ENCODE measurements at regions of chr1 and their contacts with region 1.

Region 1: DNA sequence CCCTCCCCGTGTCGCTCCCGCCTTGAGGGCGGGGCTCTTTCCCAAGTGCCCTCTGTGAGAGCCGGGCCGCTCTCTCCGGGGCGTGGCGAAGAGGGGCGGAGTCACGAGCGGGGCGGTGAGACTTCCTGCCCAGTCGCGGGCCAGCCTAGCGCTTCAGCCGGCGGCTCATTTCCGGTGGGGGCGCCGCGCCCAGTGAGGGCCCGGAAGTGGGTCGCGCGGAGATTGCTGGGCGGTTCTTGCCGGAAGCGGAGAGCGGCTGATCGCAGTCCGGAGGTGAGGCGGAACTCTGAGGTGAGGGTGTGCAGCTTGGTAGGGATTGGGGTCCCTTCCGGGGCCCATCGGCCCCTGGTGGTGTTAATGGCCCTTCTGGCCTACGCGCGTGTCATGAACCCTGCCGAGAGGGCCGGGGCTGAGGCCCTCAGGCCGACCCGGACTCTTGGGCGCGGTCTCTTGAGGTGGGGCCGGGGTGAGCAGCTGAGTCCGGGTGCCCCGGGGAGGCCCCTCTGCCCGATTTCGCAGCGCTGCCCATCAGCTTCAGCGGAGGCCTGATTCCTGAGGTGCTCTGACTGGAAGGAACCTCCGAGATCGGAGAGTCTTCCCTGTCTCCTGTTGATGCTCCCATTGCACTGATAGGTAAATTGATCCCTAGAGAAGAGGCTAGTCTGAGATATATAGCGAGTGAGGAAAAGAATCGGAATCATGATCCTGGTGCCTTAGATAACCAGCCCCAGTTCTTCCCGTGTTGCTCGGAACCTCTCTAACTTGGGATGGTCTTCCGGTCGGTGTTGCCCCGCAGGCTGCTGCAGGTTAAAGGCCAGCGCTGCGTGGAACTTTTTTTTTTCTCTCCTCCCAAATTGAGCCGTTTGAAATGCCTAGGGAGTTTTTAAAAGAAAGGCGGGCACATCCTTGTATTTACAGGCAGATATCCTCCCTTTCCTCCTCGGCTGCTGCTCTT is at the start of gene CAP1:
- DNase-seq: peak; percentile 98 to 99 (median 99)
- H3K4me3 ChIP-seq: peak within 1 kb of the TSS; percentile 91 to 99 (median 98)
- H3K27ac ChIP-seq: peak within 1 kb of the TSS; percentile 85 to 95
- H3K4me1 ChIP-seq: peaks cover 31 to 84% (median 72%) of the 10 kb centered on the region in 4 experiments
- H3K27me3 ChIP-seq: no peaks in the 10 kb centered on the region

Region 2: GRCh38 chr1:40014812-40015594 is 25.8 kb before region 1 on chr1:
- CTCF ChIA-PET with region 1: no interaction called
- POLR2A ChIA-PET with region 1: no interaction called
- DNase-seq: no peak
- H3K4me3 ChIP-seq: peak overlapping the region in 1 of 7 experiments; percentile 10
- H3K27ac ChIP-seq: peak overlapping the region; percentile 20 to 79
- H3K4me1 ChIP-seq: peaks cover 2 to 22% (median 12%) of the 10 kb centered on the region in 4 experiments
- H3K27me3 ChIP-seq: no peaks in the 10 kb centered on the region

Region 3: GRCh38 chr1:40064797-40065499 is 24.2 kb after region 1 on chr1:
- CTCF ChIA-PET with region 1: interaction called, 42 read pairs
- POLR2A ChIA-PET with region 1: interaction called, 3 read pairs
- DNase-seq: peak; percentile 56 to 90 (median 85)
- H3K4me3 ChIP-seq: peak overlapping the region in 3 of 7 experiments; percentile 4 to 32 (median 13)
- H3K27ac ChIP-seq: peak overlapping the region; percentile 29 to 72
- H3K4me1 ChIP-seq: peaks cover 43 to 62% (median 56%) of the 10 kb centered on the region in 4 experiments
- H3K27me3 ChIP-seq: no peaks in the 10 kb centered on the region

Measured in common myeloid progenitor, CD34-positive (primary cell).